ENCODE measurements at regions of chr3 and their contacts with region 1.

Region 1: GRCh38 chr3:124014366-124014942 is 22.5 kb upstream of the ROPN1 start:
- DNase-seq: no peak
- ATAC-seq: no peak

Region 2: DNA sequence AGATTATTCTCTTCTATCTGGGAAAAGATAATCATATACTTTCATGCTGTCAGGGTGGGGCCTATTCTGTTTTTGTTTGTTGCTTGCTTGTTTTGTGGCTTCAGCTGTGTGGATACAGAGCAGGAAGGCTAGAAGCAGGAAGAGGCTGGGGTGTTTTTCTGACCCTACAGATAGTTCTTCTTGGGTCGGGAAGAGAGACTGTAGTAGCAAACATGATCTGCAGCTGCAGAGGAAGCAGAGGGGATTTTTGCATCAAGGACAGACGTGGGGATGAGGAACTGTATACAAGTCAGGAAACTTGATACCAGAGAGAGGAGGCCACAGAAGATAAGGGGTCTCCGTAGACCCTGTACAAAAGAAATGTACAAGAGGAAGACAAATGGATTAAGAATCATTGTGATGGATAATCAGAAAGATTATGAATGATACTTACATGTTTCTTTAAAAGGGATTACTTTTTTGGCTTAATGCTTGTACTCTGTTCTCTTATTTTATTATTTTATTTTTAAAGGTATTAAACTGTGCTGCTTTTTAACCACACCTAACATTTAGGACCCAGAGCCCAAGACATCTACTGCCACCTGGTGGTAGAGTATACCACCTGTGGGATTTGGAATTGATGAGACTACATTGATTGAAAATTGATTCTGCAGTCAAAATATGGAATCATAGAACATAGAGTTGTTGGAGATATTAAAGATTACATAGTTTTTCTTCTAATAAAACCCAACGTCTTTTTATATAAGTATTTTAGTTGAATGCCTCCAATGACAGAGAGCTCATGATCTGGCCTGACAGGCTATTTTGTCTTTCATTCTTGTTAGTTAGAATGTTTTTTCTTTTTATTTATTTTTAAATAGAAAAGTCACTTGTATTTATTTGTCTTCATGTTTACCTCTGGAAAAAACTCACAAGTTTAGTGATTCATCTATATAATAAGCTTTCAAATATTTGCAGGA is 64.8 kb after region 1 on chr3:
- intact Hi-C with region 1: loop called (anchors 2 kb)
- DNase-seq: no peak
- ATAC-seq: peak; percentile 68

Measured in left ventricle myocardium superior (tissue), 1 donor.